ENCODE measurements at regions of chr22 and their contacts with region 1.

Region 1: DNA sequence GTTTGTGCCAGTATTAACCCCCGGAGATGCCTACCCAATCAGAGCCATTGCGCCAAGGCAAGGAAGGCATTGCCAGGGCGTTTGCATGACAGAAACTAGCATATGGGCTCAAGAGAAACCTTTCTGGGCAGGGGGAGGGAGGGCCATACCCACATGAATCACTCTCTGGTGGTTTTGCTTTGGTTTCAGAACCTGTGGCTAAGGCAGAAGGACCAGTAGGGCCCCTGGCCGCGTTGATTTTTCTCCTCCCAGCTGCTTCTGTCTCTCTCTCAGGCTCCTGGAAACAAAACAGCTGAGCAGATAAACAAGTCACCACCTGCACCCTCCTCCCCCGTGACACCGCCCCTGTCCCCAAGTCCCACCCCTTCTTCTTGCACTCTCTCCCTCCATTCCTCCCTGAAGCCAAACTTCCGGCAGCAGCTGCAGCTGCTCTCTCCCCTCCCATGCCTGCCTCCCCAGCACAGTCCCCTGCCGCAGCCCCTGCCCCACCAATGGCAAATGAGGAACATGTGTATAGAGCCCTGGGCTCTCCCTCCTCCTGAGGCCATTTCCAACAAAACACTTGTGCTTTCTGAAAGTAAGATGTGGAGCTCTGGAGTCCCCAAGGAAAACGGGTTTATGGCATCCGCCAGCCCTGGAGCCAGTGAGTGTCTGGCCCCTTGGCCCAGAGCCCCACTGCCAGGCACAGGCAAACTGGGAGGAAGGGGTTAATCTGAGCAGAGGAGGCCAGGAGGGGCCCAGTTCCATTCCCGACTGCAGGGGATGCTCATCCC is 39.0 kb upstream of the ADA2 start:
- DNase-seq: no peak
- H3K4me3 ChIP-seq: no peak overlapping the region
- H3K27me3 ChIP-seq: no peaks in the 10 kb centered on the region
- CTCF ChIP-seq: no peak

Region 2: DNA sequence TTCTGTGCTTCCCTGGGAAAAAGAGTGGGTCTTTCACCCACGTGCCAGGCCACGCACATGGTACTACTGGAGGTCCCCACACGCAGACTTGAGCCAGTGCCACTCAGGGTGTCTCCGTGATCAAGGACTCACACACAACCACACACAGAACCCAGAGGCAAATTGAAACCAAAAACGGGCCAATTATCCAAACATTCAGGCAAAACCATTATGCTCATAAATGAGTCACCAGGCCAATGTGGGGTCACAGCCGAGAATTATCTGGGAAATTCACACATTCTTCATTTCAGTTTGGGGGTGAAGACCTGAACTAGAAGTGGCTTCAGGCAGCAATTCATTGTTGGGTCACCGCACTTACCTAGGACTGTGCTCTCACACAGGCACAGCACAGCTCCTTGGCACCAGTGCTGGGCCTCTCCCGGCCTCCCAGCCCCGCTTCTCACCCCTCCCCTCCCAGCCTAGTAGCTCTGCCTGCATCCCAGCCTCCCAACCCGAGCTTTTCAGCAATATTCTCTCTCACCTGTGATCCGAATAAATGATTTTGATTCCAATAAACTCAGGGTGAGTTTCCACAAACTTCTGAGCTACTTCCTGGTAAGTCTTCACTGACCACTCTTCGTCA is 66.9 kb before region 1 on chr22:
- CTCF ChIA-PET with region 1: no interaction called
- POLR2A ChIA-PET with region 1: interaction called, 20 read pairs
- DNase-seq: peak; percentile 51
- H3K4me3 ChIP-seq: 0 out of 2 replicates have a peak overlapping the region, but pooled peaks have one; percentile 5
- H3K27me3 ChIP-seq: no peaks in the 10 kb centered on the region
- CTCF ChIP-seq: no peak

Region 3: GRCh38 chr22:17243524-17243923 is 14.7 kb before region 1 on chr22:
- CTCF ChIA-PET with region 1: no interaction called
- POLR2A ChIA-PET with region 1: no interaction called
- DNase-seq: no peak
- H3K4me3 ChIP-seq: no peak overlapping the region
- H3K27me3 ChIP-seq: no peaks in the 10 kb centered on the region
- CTCF ChIP-seq: no peak